ENCODE measurements at regions of chr18 and their contacts with region 1.

Region 1: GRCh38 chr18:43571078-43571689 is 293.9 kb upstream of the SYT4 start:
- DNase-seq: peak; percentile 84
- H3K4me3 ChIP-seq: no peak overlapping the region
- H3K27ac ChIP-seq: no peak overlapping the region
- H3K4me1 ChIP-seq: peaks cover 4% of the 10 kb centered on the region
- H3K27me3 ChIP-seq: no peaks in the 10 kb centered on the region
- CTCF ChIP-seq: peak; percentile 83

Region 2: GRCh38 chr18:43587538-43588153 is 16.5 kb after region 1 on chr18:
- CTCF ChIA-PET with region 1: interaction called, 16 read pairs
- POLR2A ChIA-PET with region 1: no interaction called
- intact Hi-C with region 1: loop called (anchors 2 kb)
- DNase-seq: peak; percentile 70
- H3K4me3 ChIP-seq: no peak overlapping the region
- H3K27ac ChIP-seq: peak overlapping the region; percentile 58
- H3K4me1 ChIP-seq: peaks cover 7% of the 10 kb centered on the region
- H3K27me3 ChIP-seq: no peaks in the 10 kb centered on the region
- CTCF ChIP-seq: peak; percentile 77